CD4-positive, alpha-beta memory T cell (primary cell): ENCODE measurements at regions of chr15 and their contacts with region 1.

Region 1: GRCh38 chr15:75453703-75454470 is 2.4 kb upstream of the SIN3A start:
- DNase-seq: peak; percentile 98 to 100 (median 99)
- H3K4me3 ChIP-seq: peak overlapping the region; percentile 70 to 86
- H3K4me3 Mint-ChIP-seq: peak overlapping the region; percentile 90 to 99 (median 97)
- H3K27ac ChIP-seq: peak overlapping the region; percentile 98
- H3K27ac Mint-ChIP-seq: peak overlapping the region; percentile 98 to 100 (median 99)
- H3K4me1 ChIP-seq: peaks cover 36% of the 10 kb centered on the region
- H3K4me1 Mint-ChIP-seq: peaks cover 26 to 55% (median 33%) of the 10 kb centered on the region in 4 donors
- H3K27me3 ChIP-seq: no peaks in the 10 kb centered on the region
- H3K27me3 Mint-ChIP-seq: peaks cover 0 to 2% of the 10 kb centered on the region in 2 donors

Region 2: GRCh38 chr15:74781431-74782258 is 672.2 kb before region 1 on chr15 and contains the start of gene CSK:
- CTCF ChIA-PET with region 1: no interaction called
- POLR2A ChIA-PET with region 1: interaction called, 8 read pairs
- intact Hi-C with region 1: loop called (anchors 2 kb)
- DNase-seq: peak; percentile 74 to 87 (median 84)
- H3K4me3 ChIP-seq: peak within 1 kb of the TSS; percentile 93 to 97
- H3K4me3 Mint-ChIP-seq: peak within 1 kb of the TSS; percentile 90 to 97 (median 96)
- H3K27ac ChIP-seq: peak within 1 kb of the TSS; percentile 86
- H3K27ac Mint-ChIP-seq: peak within 1 kb of the TSS; percentile 95 to 98 (median 98)
- H3K4me1 ChIP-seq: peaks cover 80% of the 10 kb centered on the region
- H3K4me1 Mint-ChIP-seq: peaks cover 48 to 90% (median 62%) of the 10 kb centered on the region in 4 donors
- H3K27me3 ChIP-seq: no peaks in the 10 kb centered on the region
- H3K27me3 Mint-ChIP-seq: no peaks in the 10 kb centered on the region
- total RNA-seq, gene CSK: 234 to 247 TPM

Region 3: GRCh38 chr15:75201609-75202250 is 252.2 kb before region 1 on chr15 and contains the start of gene C15orf39:
- CTCF ChIA-PET with region 1: no interaction called
- POLR2A ChIA-PET with region 1: interaction called, 5 read pairs
- intact Hi-C with region 1: loop called (anchors 5 kb)
- DNase-seq: peak; percentile 71 to 87 (median 83)
- H3K4me3 ChIP-seq: peak within 1 kb of the TSS; percentile 65 to 70
- H3K4me3 Mint-ChIP-seq: peak within 1 kb of the TSS; percentile 89 to 97 (median 94)
- H3K27ac ChIP-seq: peak within 1 kb of the TSS; percentile 69
- H3K27ac Mint-ChIP-seq: peak within 1 kb of the TSS; percentile 90 to 96 (median 93)
- H3K4me1 ChIP-seq: peaks cover 40% of the 10 kb centered on the region
- H3K4me1 Mint-ChIP-seq: peaks cover 16 to 58% (median 30%) of the 10 kb centered on the region in 4 donors
- H3K27me3 ChIP-seq: no peaks in the 10 kb centered on the region
- H3K27me3 Mint-ChIP-seq: no peaks in the 10 kb centered on the region
- total RNA-seq, gene C15orf39: 25.9 to 27.0 TPM

Region 4: DNA sequence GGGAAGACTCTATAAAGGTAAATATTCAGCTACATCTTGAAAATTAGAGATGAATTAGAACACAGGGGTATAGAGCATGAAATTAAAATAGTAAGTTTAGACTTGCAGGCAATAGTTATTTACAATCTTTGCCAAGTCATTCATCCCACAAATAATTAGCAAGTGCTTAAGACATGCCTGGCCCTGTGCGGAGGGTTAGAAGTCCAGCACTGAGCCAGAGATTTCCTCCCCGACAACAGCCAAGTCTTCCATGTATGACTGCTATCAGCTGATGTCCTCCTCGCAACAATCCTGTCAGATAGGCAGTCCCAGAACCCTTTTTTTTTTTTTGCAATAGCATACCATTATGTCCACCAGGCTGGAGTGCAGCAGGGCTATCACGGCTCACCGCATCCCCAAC is 17.0 kb before region 1 on chr15:
- CTCF ChIA-PET with region 1: interaction called, 4 read pairs
- POLR2A ChIA-PET with region 1: interaction called, 14 read pairs
- intact Hi-C with region 1: no loop called
- DNase-seq: no peak
- H3K4me3 ChIP-seq: no peak overlapping the region
- H3K4me3 Mint-ChIP-seq: no peak overlapping the region
- H3K27ac ChIP-seq: no peak overlapping the region
- H3K27ac Mint-ChIP-seq: peak overlapping the region in 3 of 7 donors; percentile 36 to 50 (median 36)
- H3K4me1 ChIP-seq: peaks cover 26% of the 10 kb centered on the region
- H3K4me1 Mint-ChIP-seq: peaks cover 34 to 70% (median 52%) of the 10 kb centered on the region in 4 donors
- H3K27me3 ChIP-seq: no peaks in the 10 kb centered on the region
- H3K27me3 Mint-ChIP-seq: no peaks in the 10 kb centered on the region

Region 5: DNA sequence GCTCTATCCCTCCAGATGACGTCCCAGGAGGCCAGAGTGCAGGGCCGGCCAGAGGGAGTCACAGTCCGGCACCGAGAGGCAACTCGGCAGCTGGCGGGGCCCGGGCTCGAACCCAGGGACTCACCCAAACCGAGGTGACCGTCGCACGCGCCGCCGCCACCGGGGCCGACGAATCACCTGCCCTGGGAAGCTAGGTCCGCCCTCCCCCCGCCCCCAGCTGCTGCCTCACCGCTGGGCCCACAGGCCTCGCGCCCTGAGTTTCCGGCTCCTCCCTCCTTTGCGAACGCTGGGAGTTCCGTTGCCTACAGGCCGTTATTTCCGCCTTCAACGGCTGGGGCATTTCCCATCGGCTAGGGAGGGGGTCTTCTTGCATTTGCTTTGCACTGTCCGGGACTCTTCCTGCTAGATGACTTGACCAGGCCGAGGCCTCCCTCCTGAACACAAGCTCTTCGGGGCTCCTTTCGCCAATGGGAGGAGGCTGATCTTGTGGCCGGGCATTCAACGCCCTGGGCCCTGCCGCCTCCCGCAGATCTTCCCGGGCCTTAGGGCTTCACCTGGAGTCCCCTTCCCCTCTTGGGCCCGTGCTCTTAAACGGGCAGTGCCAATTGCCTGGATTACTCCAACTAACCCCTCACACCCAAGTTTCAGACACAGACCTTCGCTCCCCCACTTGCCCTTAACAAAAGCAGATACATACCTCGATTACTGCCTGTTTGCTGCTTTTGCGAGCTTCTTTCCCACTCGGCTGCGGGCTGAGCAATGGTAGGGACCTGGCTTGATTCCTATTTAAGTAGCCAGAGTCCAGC is 171.9 kb after region 1 on chr15 and contains the start of gene SNUPN:
- CTCF ChIA-PET with region 1: interaction called, 5 read pairs
- POLR2A ChIA-PET with region 1: interaction called, 129 read pairs
- intact Hi-C with region 1: loop called (anchors 1 kb)
- DNase-seq: peak; percentile 88 to 94 (median 89)
- H3K4me3 ChIP-seq: peak within 1 kb of the TSS; percentile 94 to 99
- H3K4me3 Mint-ChIP-seq: peak within 1 kb of the TSS; percentile 91 to 97 (median 94)
- H3K27ac ChIP-seq: peak within 1 kb of the TSS; percentile 97
- H3K27ac Mint-ChIP-seq: peak within 1 kb of the TSS; percentile 96 to 99 (median 98)
- H3K4me1 ChIP-seq: peaks cover 22% of the 10 kb centered on the region
- H3K4me1 Mint-ChIP-seq: peaks cover 14 to 35% (median 24%) of the 10 kb centered on the region in 4 donors
- H3K27me3 ChIP-seq: no peaks in the 10 kb centered on the region
- H3K27me3 Mint-ChIP-seq: no peaks in the 10 kb centered on the region
- total RNA-seq, gene SNUPN: 21.0 to 23.5 TPM

Region 6: DNA sequence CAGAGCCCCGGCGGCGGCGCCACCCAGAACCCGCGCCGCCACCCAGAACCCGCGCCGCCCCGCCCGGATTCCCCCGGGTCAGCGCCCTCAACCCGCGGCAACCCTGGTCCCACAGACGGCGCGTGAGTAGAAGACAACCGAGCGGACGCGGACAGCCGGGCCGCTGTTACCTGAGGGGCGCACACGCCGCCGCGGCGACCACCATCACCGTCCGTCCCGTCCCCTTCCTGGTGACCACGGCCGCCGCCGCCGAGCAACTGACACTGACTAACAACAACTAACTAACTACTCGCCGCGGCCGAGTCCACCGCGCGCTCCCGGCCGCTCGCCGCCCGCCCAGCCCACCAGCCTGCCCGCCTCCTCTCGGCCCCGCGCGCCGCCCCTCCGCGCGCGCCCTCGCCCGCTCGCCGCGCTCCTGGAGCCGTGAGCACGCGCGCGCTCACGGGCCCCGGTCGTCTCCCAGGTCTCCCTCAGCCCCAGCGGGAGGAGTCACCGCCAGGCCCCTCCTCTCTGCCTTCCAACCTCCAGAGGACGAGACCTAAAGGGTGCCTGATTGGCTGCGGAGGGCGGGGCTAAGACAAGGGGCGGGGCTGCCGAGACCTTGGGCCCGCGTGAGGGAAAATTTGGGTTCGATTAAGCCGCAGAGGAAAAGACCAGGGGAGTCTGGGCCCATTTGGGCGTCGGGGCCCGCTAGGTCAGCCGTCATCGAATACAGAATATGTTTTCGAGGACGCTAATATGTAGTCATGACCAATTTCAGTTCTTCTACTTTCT is 1966.1 kb after region 1 on chr15 and contains the start of gene PEAK1:
- CTCF ChIA-PET with region 1: no interaction called
- POLR2A ChIA-PET with region 1: no interaction called
- intact Hi-C with region 1: loop called (anchors 10 kb)
- DNase-seq: peak; percentile 98 to 100 (median 99)
- H3K4me3 ChIP-seq: peak within 1 kb of the TSS; percentile 88 to 98
- H3K4me3 Mint-ChIP-seq: peak within 1 kb of the TSS; percentile 95 to 100 (median 98)
- H3K27ac ChIP-seq: peak within 1 kb of the TSS; percentile 84
- H3K27ac Mint-ChIP-seq: peak within 1 kb of the TSS; percentile 95 to 99 (median 98)
- H3K4me1 ChIP-seq: peaks cover 14% of the 10 kb centered on the region
- H3K4me1 Mint-ChIP-seq: peaks cover 27 to 49% (median 36%) of the 10 kb centered on the region in 4 donors
- H3K27me3 ChIP-seq: no peaks in the 10 kb centered on the region
- H3K27me3 Mint-ChIP-seq: peaks cover 0 to 3% of the 10 kb centered on the region in 2 donors
- total RNA-seq, gene PEAK1: 7.8 to 10.1 TPM